Transverse colon (tissue), 4 donors: ENCODE measurements at regions of chr12 and their contacts with region 1.

Region 1: GRCh38 chr12:26884765-26885576 is 52.0 kb upstream of the ITPR2 start:
- DNase-seq: peak; percentile 89
- H3K4me3 ChIP-seq: no peak overlapping the region
- H3K27ac ChIP-seq: no peak overlapping the region
- H3K4me1 ChIP-seq: peaks cover 0 to 3% (median 2%) of the 10 kb centered on the region in 4 donors
- H3K27me3 ChIP-seq: no peaks in the 10 kb centered on the region
- CTCF ChIP-seq: peak; percentile 92 to 97 (median 95)
- EP300 ChIP-seq: no peak
- POLR2A ChIP-seq: no peak

Region 2: DNA sequence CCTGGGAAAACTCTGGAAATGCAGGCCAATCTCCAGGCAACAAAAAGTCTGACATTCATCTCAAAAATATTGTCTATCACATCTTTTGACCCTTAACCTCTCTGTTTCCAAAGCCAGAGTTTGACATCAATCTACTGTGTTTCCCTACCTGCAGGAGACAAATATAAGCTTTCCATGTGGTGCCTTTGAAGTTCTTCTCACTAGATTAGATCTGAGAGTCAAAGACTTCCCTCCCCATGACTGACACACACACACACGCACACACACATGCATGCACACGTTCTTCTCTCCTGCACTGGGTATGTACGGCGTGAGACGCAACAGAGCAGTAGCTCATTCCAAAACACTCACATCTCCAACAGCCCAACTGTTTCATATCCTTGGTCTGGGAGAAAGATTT is 43.9 kb before region 1 on chr12:
- in situ Hi-C with region 1: no loop called
- intact Hi-C with region 1: no loop called
- DNase-seq: no peak
- H3K4me3 ChIP-seq: no peak overlapping the region
- H3K27ac ChIP-seq: no peak overlapping the region
- H3K4me1 ChIP-seq: peaks cover 0 to 7% (median 0%) of the 10 kb centered on the region in 4 donors
- H3K27me3 ChIP-seq: no peaks in the 10 kb centered on the region
- CTCF ChIP-seq: no peak
- EP300 ChIP-seq: no peak
- POLR2A ChIP-seq: no peak

Region 3: DNA sequence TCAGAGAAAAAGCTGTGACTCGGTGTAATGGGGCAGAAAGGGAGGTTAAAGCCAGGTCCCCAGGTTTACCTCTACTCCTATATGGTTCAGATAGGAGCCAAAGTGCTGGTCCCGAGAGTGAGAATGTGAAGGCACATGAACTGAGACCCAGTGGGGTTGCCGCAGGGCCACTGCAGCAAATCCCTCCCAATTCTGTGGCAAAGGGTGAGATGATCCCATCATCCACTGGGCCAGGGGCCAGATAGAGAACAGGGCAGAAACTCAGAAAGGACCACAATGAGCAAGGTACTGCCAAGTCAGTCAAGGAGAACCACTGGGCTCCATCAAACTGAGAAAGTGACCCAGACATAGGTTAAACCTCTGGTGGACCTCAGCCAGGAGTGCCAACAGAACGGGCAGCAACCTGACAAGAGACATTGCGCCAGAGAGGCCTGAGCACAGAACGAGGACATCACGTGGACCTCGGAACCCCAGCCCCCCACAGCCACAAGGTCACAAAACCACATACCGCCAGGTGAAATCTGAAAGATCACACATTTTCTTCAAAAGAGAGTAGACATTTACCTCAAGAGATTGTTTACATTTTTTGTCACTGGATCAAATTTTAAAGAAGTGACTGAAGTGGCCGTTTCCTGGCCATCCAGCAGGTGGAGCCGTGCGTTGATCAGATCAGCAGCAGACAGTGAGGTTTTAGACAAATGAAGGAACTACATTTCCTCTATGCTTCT is 31.5 kb before region 1 on chr12:
- in situ Hi-C with region 1: no loop called
- intact Hi-C with region 1: loop called (anchors 5 kb)
- DNase-seq: peak; percentile 76
- H3K4me3 ChIP-seq: no peak overlapping the region
- H3K27ac ChIP-seq: no peak overlapping the region
- H3K4me1 ChIP-seq: no peaks in the 10 kb centered on the region
- H3K27me3 ChIP-seq: no peaks in the 10 kb centered on the region
- CTCF ChIP-seq: peak; percentile 80 to 88 (median 84)
- EP300 ChIP-seq: no peak
- POLR2A ChIP-seq: no peak